CD14-positive monocyte (primary cell): ENCODE measurements at regions of chr1 and their contacts with region 1.

Region 1: GRCh38 chr1:245797592-245798348 is 643.0 kb downstream of the KIF26B start:
- DNase-seq: peak in 2 of 3 donors; percentile 3 to 9
- H3K4me3 ChIP-seq: no peak overlapping the region
- H3K4me3 Mint-ChIP-seq: no peak overlapping the region
- H3K27ac ChIP-seq: no peak overlapping the region
- H3K27ac Mint-ChIP-seq: no peak overlapping the region
- H3K4me1 ChIP-seq: no peaks in the 10 kb centered on the region
- H3K4me1 Mint-ChIP-seq: no peaks in the 10 kb centered on the region
- H3K27me3 ChIP-seq: no peaks in the 10 kb centered on the region
- H3K27me3 Mint-ChIP-seq: peaks cover 0 to 2% (median 0%) of the 10 kb centered on the region in 3 donors
- CTCF ChIP-seq: peak; percentile 75

Region 2: DNA sequence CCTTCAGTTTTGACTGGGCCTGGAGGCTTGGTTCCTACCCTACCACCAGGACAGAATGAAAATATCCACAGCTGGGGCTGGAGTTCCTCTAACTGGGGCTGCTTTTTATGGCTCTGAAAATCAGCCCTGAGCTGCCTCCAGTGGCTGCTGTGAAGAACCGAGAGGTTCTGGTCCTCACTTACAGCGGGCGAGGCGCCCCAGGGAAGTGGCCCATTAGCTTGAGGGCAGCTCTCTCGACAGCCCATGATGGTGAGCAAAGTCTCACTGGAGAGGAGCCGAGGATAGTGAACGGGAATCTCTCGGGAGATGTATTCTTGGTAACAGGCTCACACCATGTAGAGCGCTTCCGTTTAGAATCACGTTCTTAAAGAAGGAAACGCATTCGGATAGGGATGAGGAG is 183.3 kb before region 1 on chr1:
- intact Hi-C with region 1: loop called in 1 of 2 experiments (anchors 10 kb)
- DNase-seq: no peak
- H3K4me3 ChIP-seq: no peak overlapping the region
- H3K4me3 Mint-ChIP-seq: no peak overlapping the region
- H3K27ac ChIP-seq: no peak overlapping the region
- H3K27ac Mint-ChIP-seq: no peak overlapping the region
- H3K4me1 ChIP-seq: peaks cover 0 to 4% of the 10 kb centered on the region in 2 donors
- H3K4me1 Mint-ChIP-seq: peaks cover 9% of the 10 kb centered on the region
- H3K27me3 ChIP-seq: no peaks in the 10 kb centered on the region
- H3K27me3 Mint-ChIP-seq: peaks cover 8 to 9% (median 8%) of the 10 kb centered on the region in 3 donors
- CTCF ChIP-seq: no peak